AG04449 (cell line): ENCODE measurements at regions of chr7 and their contacts with region 1.

Region 1: DNA sequence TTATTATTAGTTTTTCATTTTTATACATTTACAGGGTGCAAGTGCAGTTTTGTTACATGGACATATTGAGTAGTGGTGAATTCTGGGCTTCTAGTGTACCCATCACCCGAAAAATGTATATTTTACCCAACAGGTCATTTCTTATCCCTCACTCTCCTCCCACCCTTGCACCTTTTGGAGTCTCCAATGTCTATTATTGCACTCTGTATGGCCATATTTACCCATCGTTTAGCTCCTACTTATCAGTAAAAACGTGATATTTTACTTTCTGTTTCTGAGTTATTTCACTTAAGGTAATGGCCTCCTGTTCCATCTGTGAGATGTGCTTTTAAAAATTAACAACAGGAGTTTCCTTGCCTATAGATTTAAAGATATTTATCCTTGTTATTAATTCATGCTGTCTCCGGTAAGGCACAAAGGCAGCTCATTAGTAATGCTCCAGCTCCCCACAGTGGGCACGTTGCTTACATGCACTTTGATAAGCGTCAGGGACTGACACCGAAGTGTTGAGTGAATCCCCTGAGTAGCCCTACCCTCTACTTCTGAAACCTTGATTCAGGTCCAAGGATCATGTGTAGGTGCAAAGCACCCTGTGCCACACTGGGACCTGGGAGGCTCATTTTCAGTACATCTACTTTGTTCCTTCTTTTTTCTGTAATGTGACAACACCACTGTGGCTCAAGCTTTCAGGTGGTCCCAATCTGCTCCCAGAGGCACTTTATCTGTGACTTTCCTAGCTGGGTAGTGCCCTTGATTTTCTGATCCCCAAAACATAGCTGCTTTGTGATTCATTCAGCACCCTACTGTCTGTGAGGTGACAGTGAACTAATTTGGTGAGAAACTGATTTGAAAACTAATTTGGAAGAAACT is 27.3 kb downstream of the HYAL4 start:
- DNase-seq: no peak
- H3K4me3 ChIP-seq: no peak overlapping the region
- CTCF ChIP-seq: peak; percentile 27

Region 2: GRCh38 chr7:123494193-123494796 is 377.9 kb before region 1 on chr7:
- CTCF ChIA-PET with region 1: interaction called, 17 read pairs
- POLR2A ChIA-PET with region 1: no interaction called
- DNase-seq: no peak
- H3K4me3 ChIP-seq: no peak overlapping the region
- CTCF ChIP-seq: peak; percentile 34

Region 3: DNA sequence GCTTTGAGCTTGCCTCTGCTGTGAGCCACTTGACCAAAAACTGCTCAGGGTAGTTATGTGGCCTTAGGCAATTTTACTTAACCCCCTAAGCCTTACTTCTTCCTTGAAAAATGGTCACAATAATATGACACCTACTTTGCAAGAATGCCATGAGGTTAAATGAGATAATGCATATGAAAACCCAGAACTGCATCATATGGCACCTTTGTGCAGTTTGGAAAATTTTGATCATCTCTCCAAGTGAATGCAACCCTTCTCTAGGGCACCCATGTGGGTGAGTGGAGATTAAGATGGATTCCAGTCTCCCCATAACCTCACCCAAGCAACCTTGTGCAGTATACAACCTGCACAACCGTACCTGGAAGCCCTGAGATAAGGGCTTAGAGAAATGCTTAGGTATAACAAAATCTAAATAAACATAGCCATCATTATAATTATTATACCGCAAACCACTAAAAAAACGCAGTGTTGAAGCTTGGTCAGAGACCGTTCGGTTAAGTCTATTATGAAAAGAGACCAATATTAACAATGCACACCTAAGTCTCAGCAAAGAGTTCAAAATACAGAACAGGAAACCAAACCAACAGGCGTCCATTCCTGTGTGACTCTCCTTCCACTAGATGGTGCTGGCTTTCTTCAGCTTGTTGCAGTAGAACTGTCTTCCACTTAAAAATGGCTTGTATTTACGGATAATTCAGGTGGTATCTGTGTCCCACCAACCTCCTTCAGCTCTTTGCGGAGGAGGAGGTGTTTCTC is 291.6 kb before region 1 on chr7:
- CTCF ChIA-PET with region 1: interaction called, 12 read pairs
- POLR2A ChIA-PET with region 1: no interaction called
- DNase-seq: peak; percentile 5
- H3K4me3 ChIP-seq: no peak overlapping the region
- CTCF ChIP-seq: peak; percentile 67

Region 4: DNA sequence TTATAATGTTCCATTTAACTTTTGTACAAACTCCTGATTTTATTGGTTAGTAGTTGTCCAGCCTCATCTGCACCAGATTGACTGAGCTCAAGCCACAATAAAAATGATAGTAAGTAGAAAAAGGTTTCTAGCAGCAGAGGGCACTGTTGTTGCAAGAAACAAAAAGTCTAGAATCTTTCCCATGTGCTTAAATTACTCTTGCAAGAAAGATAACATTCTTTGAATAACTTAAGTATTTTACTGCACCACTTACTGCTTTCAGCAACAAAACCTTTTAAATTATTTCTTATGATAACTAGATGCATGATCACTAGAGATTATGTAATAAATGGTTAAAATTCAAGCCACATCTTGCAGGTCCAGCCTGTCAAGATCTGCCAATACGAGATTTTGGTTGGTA is 189.5 kb before region 1 on chr7:
- CTCF ChIA-PET with region 1: interaction called, 17 read pairs
- POLR2A ChIA-PET with region 1: no interaction called
- DNase-seq: peak; percentile 34
- H3K4me3 ChIP-seq: no peak overlapping the region
- CTCF ChIP-seq: peak; percentile 25

Region 5: GRCh38 chr7:123797673-123798527 is 74.3 kb before region 1 on chr7:
- CTCF ChIA-PET with region 1: interaction called, 17 read pairs
- POLR2A ChIA-PET with region 1: no interaction called
- DNase-seq: peak; percentile 26
- H3K4me3 ChIP-seq: no peak overlapping the region
- CTCF ChIP-seq: peak; percentile 25